ENCODE measurements at regions of chr1 and their contacts with region 1.

Region 1: DNA sequence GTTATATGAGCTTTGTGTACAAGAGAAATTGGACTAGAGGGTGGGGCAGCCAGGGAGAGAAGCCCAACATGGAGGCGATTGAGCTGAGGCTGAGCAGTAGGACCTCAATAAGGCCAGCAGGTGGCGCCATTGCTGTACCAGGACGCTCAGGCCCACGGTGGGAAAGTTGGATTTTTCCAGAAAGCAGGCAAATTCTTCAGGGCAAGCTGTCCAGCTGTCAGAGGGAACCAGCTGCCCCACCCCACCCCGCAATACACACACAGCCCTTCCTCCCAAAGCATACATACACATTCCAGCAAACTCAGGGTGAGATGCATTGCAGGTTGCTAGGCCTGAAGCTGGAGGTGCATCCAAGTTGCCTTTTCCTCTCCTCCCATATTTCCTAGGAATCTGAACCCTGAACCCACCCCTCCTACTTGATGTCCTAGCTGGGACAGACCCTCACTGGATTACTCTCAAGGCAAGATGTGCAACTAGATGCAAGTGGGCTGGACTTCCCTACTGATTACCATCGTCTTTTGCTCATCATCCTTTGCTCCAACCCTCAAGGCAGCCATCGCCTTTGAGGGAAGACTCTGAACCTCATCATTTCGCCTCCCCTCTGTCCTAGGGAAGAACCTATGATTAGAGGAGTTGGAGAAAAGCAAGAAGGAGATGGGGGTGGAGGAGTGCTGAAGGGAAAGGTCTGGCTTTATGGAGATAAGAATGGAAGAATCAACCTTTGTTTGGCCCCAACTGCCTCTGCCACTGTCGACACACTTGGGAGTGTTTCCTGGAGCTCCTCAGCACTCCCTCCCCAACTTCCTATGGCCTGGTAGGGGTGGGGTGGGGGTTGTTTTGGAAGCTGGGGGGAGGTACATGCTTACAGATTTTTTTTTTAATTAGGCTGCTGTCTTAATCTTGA is 25.5 kb downstream of the CD34 start:
- DNase-seq: peak; percentile 77
- H3K4me3 Mint-ChIP-seq: no peak overlapping the region
- H3K27ac Mint-ChIP-seq: peak overlapping the region; percentile 97
- H3K4me1 Mint-ChIP-seq: peaks cover 43% of the 10 kb centered on the region
- H3K27me3 Mint-ChIP-seq: peaks cover 3% of the 10 kb centered on the region

Region 2: GRCh38 chr1:207463021-207463420 is 422.4 kb before region 1 on chr1:
- CTCF ChIA-PET with region 1: no interaction called
- POLR2A ChIA-PET with region 1: no interaction called
- DNase-seq: no peak
- H3K4me3 Mint-ChIP-seq: no peak overlapping the region
- H3K27ac Mint-ChIP-seq: no peak overlapping the region
- H3K4me1 Mint-ChIP-seq: peaks cover 14% of the 10 kb centered on the region
- H3K27me3 Mint-ChIP-seq: peaks cover 14% of the 10 kb centered on the region

Region 3: DNA sequence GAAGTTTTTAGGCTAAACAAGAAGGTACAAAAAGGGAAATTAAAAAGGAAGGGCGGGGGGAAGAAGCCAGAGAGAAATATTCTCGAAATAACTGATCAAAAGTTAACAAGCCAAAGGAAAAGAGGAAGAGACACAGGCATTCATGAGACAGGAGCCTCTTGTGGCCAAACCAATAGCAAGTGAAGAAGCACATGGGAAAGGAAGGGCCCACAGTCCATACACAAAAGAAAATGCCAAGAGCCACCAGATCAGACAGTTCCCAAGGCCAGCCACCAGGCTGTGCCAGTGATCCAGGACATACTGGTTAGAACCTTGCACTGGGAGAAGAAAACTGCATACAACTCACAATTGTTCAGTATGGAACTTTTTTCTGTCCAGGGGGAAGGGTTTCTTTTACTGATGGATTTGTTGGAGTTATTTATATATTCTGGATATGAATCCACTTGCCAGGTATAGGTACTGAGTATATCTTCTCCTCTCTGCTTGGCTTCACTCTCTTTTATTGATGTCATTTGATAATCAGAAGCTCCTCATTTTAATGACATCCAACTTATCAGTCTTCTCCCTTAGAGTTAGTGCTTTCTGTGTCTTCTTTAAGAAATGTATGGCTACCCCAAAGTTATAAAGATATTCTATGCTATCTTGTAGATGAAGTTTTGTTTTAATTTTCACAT is 56.8 kb before region 1 on chr1:
- CTCF ChIA-PET with region 1: interaction called, 75 read pairs
- POLR2A ChIA-PET with region 1: interaction called, 7 read pairs
- DNase-seq: peak; percentile 65
- H3K4me3 Mint-ChIP-seq: no peak overlapping the region
- H3K27ac Mint-ChIP-seq: peak overlapping the region; percentile 16
- H3K4me1 Mint-ChIP-seq: peaks cover 97% of the 10 kb centered on the region
- H3K27me3 Mint-ChIP-seq: no peaks in the 10 kb centered on the region

Region 4: GRCh38 chr1:207868774-207869721 is 16.3 kb before region 1 on chr1:
- CTCF ChIA-PET with region 1: interaction called, 423 read pairs
- POLR2A ChIA-PET with region 1: interaction called, 163 read pairs
- DNase-seq: peak; percentile 76
- H3K4me3 Mint-ChIP-seq: peak overlapping the region; percentile 93
- H3K27ac Mint-ChIP-seq: peak overlapping the region; percentile 91
- H3K4me1 Mint-ChIP-seq: peaks cover 84% of the 10 kb centered on the region
- H3K27me3 Mint-ChIP-seq: no peaks in the 10 kb centered on the region

Region 5: GRCh38 chr1:207902566-207902965 is 17.2 kb after region 1 on chr1:
- CTCF ChIA-PET with region 1: interaction called, 51 read pairs
- POLR2A ChIA-PET with region 1: no interaction called
- DNase-seq: no peak
- H3K4me3 Mint-ChIP-seq: no peak overlapping the region
- H3K27ac Mint-ChIP-seq: no peak overlapping the region
- H3K4me1 Mint-ChIP-seq: peaks cover 35% of the 10 kb centered on the region
- H3K27me3 Mint-ChIP-seq: peaks cover under 1% of the 10 kb centered on the region

Region 6: GRCh38 chr1:207972337-207972736 is 87.0 kb after region 1 on chr1:
- CTCF ChIA-PET with region 1: interaction called, 15 read pairs
- POLR2A ChIA-PET with region 1: no interaction called
- DNase-seq: no peak
- H3K4me3 Mint-ChIP-seq: no peak overlapping the region
- H3K27ac Mint-ChIP-seq: no peak overlapping the region
- H3K4me1 Mint-ChIP-seq: no peaks in the 10 kb centered on the region
- H3K27me3 Mint-ChIP-seq: peaks cover 37% of the 10 kb centered on the region

Region 7: DNA sequence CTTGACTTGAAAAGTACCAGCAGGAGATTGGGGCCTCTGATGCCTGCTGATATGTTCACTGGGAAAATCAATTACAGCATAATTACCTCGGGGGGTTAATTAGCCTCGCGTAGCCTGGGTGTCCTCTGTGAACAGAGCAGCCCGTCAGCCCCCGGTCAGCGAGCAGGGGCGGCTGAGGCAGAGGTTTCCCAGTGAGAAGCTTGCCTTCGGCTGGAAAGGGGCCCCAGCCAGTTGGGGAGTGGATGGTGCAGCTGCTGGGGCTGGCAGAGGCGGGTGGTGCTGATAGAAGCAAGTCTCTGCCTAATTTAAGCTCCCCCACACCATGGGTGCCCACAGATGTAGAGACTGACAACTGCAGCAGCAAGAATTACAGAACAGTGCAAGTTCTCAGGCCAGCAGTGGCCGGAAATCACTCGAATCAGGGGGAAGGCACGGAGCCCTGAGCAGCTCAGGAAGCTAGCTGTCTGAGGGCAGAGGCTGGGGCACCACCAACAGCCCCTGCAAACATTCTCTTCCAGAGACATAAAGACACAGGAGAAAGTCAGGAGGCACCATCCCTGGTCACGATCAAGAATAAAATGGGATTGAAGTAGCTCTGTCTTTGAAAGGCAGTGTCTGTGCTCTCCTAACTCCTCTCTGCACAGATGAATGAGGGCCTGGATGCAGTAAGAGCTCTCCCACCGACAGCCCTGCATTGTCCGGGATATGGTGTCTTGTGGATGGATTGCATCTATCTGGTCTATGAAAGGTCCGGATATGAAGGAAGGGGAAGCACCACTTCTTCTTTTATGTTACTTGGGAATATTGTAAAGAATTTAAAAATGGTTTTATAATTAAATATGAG is 192.1 kb after region 1 on chr1:
- CTCF ChIA-PET with region 1: no interaction called
- POLR2A ChIA-PET with region 1: no interaction called
- DNase-seq: no peak
- H3K4me3 Mint-ChIP-seq: no peak overlapping the region
- H3K27ac Mint-ChIP-seq: no peak overlapping the region
- H3K4me1 Mint-ChIP-seq: no peaks in the 10 kb centered on the region
- H3K27me3 Mint-ChIP-seq: peaks cover 2% of the 10 kb centered on the region

Region 8: GRCh38 chr1:208318150-208318734 is 432.9 kb after region 1 on chr1:
- CTCF ChIA-PET with region 1: no interaction called
- POLR2A ChIA-PET with region 1: no interaction called
- DNase-seq: no peak
- H3K4me3 Mint-ChIP-seq: no peak overlapping the region
- H3K27ac Mint-ChIP-seq: no peak overlapping the region
- H3K4me1 Mint-ChIP-seq: no peaks in the 10 kb centered on the region
- H3K27me3 Mint-ChIP-seq: peaks cover 9% of the 10 kb centered on the region

Measured in activated CD4-positive, alpha-beta memory T cell treated with anti-CD3 and anti-CD28 coated beads, Interleukin-2, amount 10 ng/mL, durations not matched to agents 7 days and 5 days (primary cell).